ENCODE measurements at regions of chr18 and their contacts with region 1.

Region 1: DNA sequence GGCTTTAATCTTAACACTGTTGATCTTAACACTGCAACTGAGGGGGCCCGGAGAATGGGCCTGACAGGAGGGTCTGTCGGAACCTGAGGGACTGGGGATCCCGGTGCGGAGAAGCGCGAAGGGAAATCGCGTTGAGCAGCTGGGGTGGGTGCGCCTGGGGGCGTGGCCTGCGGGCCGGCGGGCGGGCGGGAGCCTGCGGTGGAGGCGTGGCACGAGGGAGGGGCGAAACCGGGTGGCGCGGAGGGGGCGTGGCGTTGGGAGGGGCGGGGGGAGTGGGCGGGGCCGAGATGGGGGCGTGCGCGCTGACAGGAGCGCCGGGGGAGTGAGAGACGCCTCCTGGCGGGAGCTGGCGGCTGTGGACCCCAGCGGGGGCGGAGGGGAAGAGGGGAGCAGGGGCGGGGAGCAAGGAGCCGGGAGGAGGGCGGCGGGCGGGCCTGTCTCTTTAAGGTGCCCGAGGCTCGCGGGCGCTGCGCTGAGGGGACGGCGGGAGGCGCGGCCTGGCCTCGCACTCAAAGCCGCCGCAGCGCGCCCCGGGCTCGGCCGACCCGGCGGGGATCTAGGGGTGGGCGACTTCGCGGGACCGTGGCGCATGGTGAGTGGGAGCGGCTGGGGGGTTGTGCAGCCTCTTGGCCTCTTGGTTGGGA is at the start of gene TWSG1:
- DNase-seq: peak; percentile 90 to 97 (median 94)
- ATAC-seq: peak; percentile 88
- H3K4me3 ChIP-seq: peak within 1 kb of the TSS; percentile 62 to 69
- H3K4me3 Mint-ChIP-seq: peak within 1 kb of the TSS; percentile 81
- H3K27ac ChIP-seq: peak within 1 kb of the TSS; percentile 61 to 67
- H3K27ac Mint-ChIP-seq: peak within 1 kb of the TSS; percentile 86
- H3K4me1 ChIP-seq: peaks cover 8% of the 10 kb centered on the region
- H3K4me1 Mint-ChIP-seq: peaks cover 27% of the 10 kb centered on the region
- H3K27me3 ChIP-seq: no peaks in the 10 kb centered on the region
- H3K27me3 Mint-ChIP-seq: no peaks in the 10 kb centered on the region
- CTCF ChIP-seq: peak; percentile 30
- total RNA-seq, gene TWSG1: 4.2 to 5.3 TPM

Region 2: GRCh38 chr18:8608795-8609658 is 725.4 kb before region 1 on chr18 and contains the start of gene RAB12:
- CTCF ChIA-PET with region 1: no interaction called
- POLR2A ChIA-PET with region 1: interaction called, 3 read pairs
- intact Hi-C with region 1: loop called in 1 of 2 experiments (anchors 5 kb)
- DNase-seq: peak; percentile 72 to 93 (median 88)
- ATAC-seq: peak; percentile 92
- H3K4me3 ChIP-seq: peak within 1 kb of the TSS; percentile 64 to 70
- H3K4me3 Mint-ChIP-seq: peak within 1 kb of the TSS; percentile 90
- H3K27ac ChIP-seq: peak within 1 kb of the TSS; percentile 53 to 70
- H3K27ac Mint-ChIP-seq: peak within 1 kb of the TSS; percentile 90
- H3K4me1 ChIP-seq: peaks cover 42% of the 10 kb centered on the region
- H3K4me1 Mint-ChIP-seq: peaks cover 50% of the 10 kb centered on the region
- H3K27me3 ChIP-seq: no peaks in the 10 kb centered on the region
- H3K27me3 Mint-ChIP-seq: no peaks in the 10 kb centered on the region
- CTCF ChIP-seq: peak; percentile 70
- total RNA-seq, gene RAB12: 20.2 to 20.9 TPM

Region 3: DNA sequence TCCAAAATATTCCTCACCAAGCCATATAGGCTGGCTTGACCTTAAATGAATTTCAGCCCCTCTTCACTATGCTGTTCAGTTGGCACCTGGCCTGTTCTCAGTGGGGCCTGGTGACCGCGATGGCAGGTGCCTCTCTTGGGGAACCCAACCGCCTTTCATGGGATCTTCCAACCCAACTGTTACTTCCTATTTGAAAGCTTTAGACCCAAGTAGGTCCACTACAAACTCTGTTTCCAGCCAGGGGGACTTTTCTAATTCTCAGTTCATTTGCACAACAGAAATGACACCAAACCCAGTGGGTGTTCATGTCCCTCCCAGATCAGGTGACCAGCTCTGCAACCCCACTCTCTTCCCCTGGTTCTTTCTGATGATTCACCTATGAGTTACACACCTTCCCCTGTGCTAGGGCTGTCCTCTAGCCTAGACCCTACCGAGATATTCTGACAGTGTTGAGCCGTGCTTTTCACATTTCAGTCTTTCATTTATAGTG is 267.6 kb before region 1 on chr18:
- CTCF ChIA-PET with region 1: no interaction called
- POLR2A ChIA-PET with region 1: no interaction called
- intact Hi-C with region 1: loop called in 1 of 2 experiments (anchors 5 kb)
- DNase-seq: no peak
- ATAC-seq: no peak
- H3K4me3 ChIP-seq: no peak overlapping the region
- H3K4me3 Mint-ChIP-seq: no peak overlapping the region
- H3K27ac ChIP-seq: no peak overlapping the region
- H3K27ac Mint-ChIP-seq: no peak overlapping the region
- H3K4me1 ChIP-seq: no peaks in the 10 kb centered on the region
- H3K4me1 Mint-ChIP-seq: no peaks in the 10 kb centered on the region
- H3K27me3 ChIP-seq: no peaks in the 10 kb centered on the region
- H3K27me3 Mint-ChIP-seq: no peaks in the 10 kb centered on the region
- CTCF ChIP-seq: no peak

Region 4: DNA sequence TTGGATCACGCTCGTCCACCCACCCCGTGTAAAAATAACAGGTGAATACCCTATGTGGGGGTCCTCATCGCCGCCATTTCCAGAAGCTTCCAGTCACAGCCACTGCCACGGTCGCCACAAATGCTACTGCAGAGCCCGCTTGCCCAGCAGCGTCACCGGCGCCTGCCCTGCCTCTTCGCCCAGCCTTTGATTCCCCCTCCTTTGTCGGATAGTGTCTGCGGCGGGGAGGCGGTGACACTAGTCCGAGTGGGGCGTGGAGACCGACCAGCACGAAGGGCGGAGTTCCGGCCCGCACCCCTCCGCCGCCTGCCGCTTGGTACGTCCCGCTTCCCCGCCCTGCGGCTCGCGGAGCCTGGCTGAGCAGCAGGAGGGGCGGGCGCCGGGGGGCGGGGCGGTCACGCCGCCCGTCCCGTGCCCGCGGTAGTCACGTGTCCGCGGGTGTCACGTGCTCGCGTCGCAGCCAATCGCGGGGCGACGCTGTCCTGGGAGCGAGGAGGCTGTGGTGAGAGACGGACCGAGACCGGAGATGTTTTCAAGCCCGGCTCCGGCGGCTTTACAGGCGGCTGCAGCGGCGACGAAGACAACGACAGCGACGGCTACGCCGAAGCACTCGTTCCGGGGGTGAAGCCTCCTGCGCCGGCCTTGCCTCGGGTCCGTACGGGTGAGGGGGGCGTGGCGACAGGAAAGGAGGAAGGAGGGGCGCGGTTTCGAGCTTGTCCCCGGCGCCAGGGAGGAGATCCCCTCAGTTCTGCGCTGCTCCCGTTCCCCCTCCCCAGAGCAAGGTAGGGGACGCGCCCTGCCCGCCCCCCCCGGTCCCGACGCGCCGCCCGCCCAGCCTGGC is 197.9 kb before region 1 on chr18 and contains the start of gene ANKRD12:
- CTCF ChIA-PET with region 1: no interaction called
- POLR2A ChIA-PET with region 1: interaction called, 8 read pairs
- intact Hi-C with region 1: loop called (anchors 1 kb)
- DNase-seq: peak; percentile 96 to 99 (median 98)
- ATAC-seq: peak; percentile 65
- H3K4me3 ChIP-seq: peak within 1 kb of the TSS; percentile 87 to 93
- H3K4me3 Mint-ChIP-seq: peak within 1 kb of the TSS; percentile 99
- H3K27ac ChIP-seq: peak within 1 kb of the TSS; percentile 94 to 96
- H3K27ac Mint-ChIP-seq: peak within 1 kb of the TSS; percentile 99
- H3K4me1 ChIP-seq: peaks cover 56% of the 10 kb centered on the region
- H3K4me1 Mint-ChIP-seq: peaks cover 68% of the 10 kb centered on the region
- H3K27me3 ChIP-seq: no peaks in the 10 kb centered on the region
- H3K27me3 Mint-ChIP-seq: no peaks in the 10 kb centered on the region
- CTCF ChIP-seq: no peak
- total RNA-seq, gene ANKRD12: 167 to 177 TPM

Region 5: GRCh38 chr18:9217743-9218451 is 116.6 kb before region 1 on chr18:
- CTCF ChIA-PET with region 1: no interaction called
- POLR2A ChIA-PET with region 1: no interaction called
- intact Hi-C with region 1: loop called in 1 of 2 experiments (anchors 10 kb)
- DNase-seq: no peak
- ATAC-seq: no peak
- H3K4me3 ChIP-seq: no peak overlapping the region
- H3K4me3 Mint-ChIP-seq: no peak overlapping the region
- H3K27ac ChIP-seq: no peak overlapping the region
- H3K27ac Mint-ChIP-seq: no peak overlapping the region
- H3K4me1 ChIP-seq: no peaks in the 10 kb centered on the region
- H3K4me1 Mint-ChIP-seq: peaks cover 5% of the 10 kb centered on the region
- H3K27me3 ChIP-seq: no peaks in the 10 kb centered on the region
- H3K27me3 Mint-ChIP-seq: no peaks in the 10 kb centered on the region
- CTCF ChIP-seq: no peak

Region 6: GRCh38 chr18:9474983-9475642 is 140.7 kb after region 1 on chr18 and contains the start of gene RALBP1:
- CTCF ChIA-PET with region 1: no interaction called
- POLR2A ChIA-PET with region 1: interaction called, 7 read pairs
- intact Hi-C with region 1: loop called (anchors 1 kb)
- DNase-seq: peak; percentile 96 to 99 (median 97)
- ATAC-seq: peak; percentile 98
- H3K4me3 ChIP-seq: peak within 1 kb of the TSS; percentile 90 to 93
- H3K4me3 Mint-ChIP-seq: peak within 1 kb of the TSS; percentile 98
- H3K27ac ChIP-seq: peak within 1 kb of the TSS; percentile 67 to 86
- H3K27ac Mint-ChIP-seq: peak within 1 kb of the TSS; percentile 97
- H3K4me1 ChIP-seq: peaks cover 9% of the 10 kb centered on the region
- H3K4me1 Mint-ChIP-seq: peaks cover 38% of the 10 kb centered on the region
- H3K27me3 ChIP-seq: no peaks in the 10 kb centered on the region
- H3K27me3 Mint-ChIP-seq: peaks cover 5% of the 10 kb centered on the region
- CTCF ChIP-seq: no peak
- total RNA-seq, gene RALBP1: 5.4 to 7.9 TPM

Region 7: GRCh38 chr18:9614401-9615279 is 280.2 kb after region 1 on chr18 and contains the start of gene PPP4R1:
- CTCF ChIA-PET with region 1: no interaction called
- POLR2A ChIA-PET with region 1: no interaction called
- intact Hi-C with region 1: loop called (anchors 2 to 10 kb)
- DNase-seq: peak; percentile 36 to 81 (median 66)
- ATAC-seq: peak; percentile 67
- H3K4me3 ChIP-seq: peak within 1 kb of the TSS; percentile 64 to 76
- H3K4me3 Mint-ChIP-seq: peak within 1 kb of the TSS; percentile 94
- H3K27ac ChIP-seq: peak within 1 kb of the TSS; percentile 4 to 63
- H3K27ac Mint-ChIP-seq: peak within 1 kb of the TSS; percentile 90
- H3K4me1 ChIP-seq: peaks cover 20% of the 10 kb centered on the region
- H3K4me1 Mint-ChIP-seq: peaks cover 36% of the 10 kb centered on the region
- H3K27me3 ChIP-seq: no peaks in the 10 kb centered on the region
- H3K27me3 Mint-ChIP-seq: no peaks in the 10 kb centered on the region
- CTCF ChIP-seq: no peak
- total RNA-seq, gene PPP4R1: 35.1 to 40.1 TPM